Heart left ventricle (tissue), 16 donors: ENCODE measurements at regions of chr9 and their contacts with region 1.

Region 1: DNA sequence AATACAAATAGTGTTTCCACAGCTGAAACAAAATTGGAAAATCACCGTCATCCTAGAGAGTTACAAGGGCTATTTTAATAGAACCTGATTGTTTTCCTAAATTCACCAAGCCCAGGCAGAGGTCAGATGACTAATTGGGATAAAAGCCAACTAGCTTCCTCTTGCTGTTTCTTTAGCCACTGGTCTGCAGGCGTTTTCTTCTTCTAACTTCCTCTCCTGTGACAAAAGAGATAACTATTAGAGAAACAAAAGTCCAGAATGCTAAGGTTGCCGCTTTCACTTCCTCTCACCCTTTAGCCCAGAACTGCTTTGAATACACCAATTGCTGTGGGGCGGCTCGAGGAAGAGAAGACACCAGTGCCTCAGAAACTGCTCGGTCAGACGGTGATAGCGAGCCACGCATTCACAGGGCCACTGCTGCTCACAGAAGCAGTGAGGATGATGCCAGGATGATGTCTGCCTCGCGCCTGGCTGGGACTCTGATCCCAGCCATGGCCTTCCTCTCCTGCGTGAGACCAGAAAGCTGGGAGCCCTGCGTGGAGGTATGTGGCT is at the start of gene TLR4:
- DNase-seq: peak; percentile 74 to 82 (median 77)
- ATAC-seq: peak; percentile 68 to 93 (median 91)
- H3K4me3 ChIP-seq: peak within 1 kb of the TSS; percentile 11 to 72 (median 59)
- H3K27ac ChIP-seq: peak within 1 kb of the TSS; percentile 75 to 95 (median 85)
- H3K4me1 ChIP-seq: peaks cover 0 to 45% (median 12%) of the 10 kb centered on the region in 12 donors
- H3K27me3 ChIP-seq: no peaks in the 10 kb centered on the region
- CTCF ChIP-seq: no peak
- POLR2A ChIP-seq: peak in 1 of 2 donors; percentile 71
- total RNA-seq, gene TLR4: 8.5 to 37.4 (median 11.0) TPM

Region 2: GRCh38 chr9:117662651-117663050 is 41.4 kb before region 1 on chr9:
- intact Hi-C with region 1: no loop called
- DNase-seq: no peak
- ATAC-seq: no peak
- H3K4me3 ChIP-seq: no peak overlapping the region
- H3K27ac ChIP-seq: no peak overlapping the region
- H3K4me1 ChIP-seq: no peaks in the 10 kb centered on the region
- H3K27me3 ChIP-seq: no peaks in the 10 kb centered on the region
- CTCF ChIP-seq: no peak
- POLR2A ChIP-seq: no peak

Region 3: GRCh38 chr9:117678871-117679270 is 25.2 kb before region 1 on chr9:
- intact Hi-C with region 1: loop called in 1 of 10 experiments (anchors 2 kb)
- DNase-seq: no peak
- ATAC-seq: peak in 1 of 4 donors; percentile 30
- H3K4me3 ChIP-seq: peak overlapping the region in 1 of 12 donors; percentile 7
- H3K27ac ChIP-seq: peak overlapping the region in 9 of 12 donors; percentile 31 to 66 (median 58)
- H3K4me1 ChIP-seq: peaks cover 0 to 36% (median 6%) of the 10 kb centered on the region in 12 donors
- H3K27me3 ChIP-seq: no peaks in the 10 kb centered on the region
- CTCF ChIP-seq: no peak
- POLR2A ChIP-seq: no peak

Region 4: DNA sequence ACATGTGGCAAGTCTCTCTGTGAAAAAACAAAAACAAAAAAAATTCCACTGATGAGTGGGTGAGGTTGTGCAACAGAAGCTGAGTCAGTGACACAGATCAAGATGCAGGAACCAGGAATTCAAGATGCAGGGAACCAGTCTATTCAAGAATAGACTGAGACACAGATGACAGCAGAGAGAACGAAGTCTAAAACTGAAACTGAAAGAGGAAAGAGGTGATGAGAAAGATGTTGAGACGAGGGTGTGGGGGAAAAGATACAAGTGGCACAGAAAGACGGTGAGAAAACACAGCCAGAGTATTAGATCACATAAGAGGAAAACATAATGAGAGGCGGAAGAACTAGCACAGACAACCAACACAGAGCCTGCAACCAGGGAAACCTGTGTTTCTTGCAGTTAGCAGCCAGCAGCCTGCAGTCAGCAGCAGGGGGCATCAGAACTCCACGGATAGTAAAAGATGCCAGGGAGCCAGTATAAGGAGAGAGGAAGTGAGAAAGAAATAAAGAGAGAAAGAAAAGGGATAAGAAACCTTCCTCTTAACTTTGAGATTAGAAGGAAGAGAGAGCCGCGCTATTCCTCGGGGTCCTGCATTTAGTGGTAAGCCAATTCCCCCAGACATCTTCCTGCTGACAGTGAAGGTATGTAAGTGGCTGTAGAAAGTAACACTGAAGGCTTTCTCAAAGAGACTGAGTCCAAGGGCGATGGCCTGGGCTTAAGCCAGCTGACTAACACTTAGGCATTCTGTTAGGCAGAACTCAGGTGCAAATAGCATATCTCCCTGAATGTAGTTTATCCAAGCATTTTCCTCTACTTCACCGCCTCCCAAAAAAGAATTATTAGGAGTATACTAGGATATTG is 79.1 kb after region 1 on chr9:
- intact Hi-C with region 1: loop called in 1 of 10 experiments (anchors 5 kb)
- DNase-seq: peak; percentile 61 to 71 (median 70)
- ATAC-seq: peak; percentile 80 to 96 (median 94)
- H3K4me3 ChIP-seq: peak overlapping the region in 10 of 12 donors; percentile 29 to 58 (median 49)
- H3K27ac ChIP-seq: peak overlapping the region in 8 of 12 donors; percentile 8 to 78 (median 44)
- H3K4me1 ChIP-seq: peaks cover 0 to 43% (median 12%) of the 10 kb centered on the region in 12 donors
- H3K27me3 ChIP-seq: no peaks in the 10 kb centered on the region
- CTCF ChIP-seq: peak; percentile 49 to 95 (median 80)
- POLR2A ChIP-seq: no peak